Colonic mucosa (tissue), 4 donors: ENCODE measurements at regions of chr2 and their contacts with region 1.

Region 1: GRCh38 chr2:201071479-201072200 is at the starts of genes HYCC2 and NDUFB3:
- DNase-seq: peak; percentile 94
- H3K4me3 ChIP-seq: peak within 1 kb of the TSS; percentile 89
- H3K27ac ChIP-seq: peak within 1 kb of the TSS; percentile 82
- H3K4me1 ChIP-seq: peaks cover 6% of the 10 kb centered on the region
- H3K27me3 ChIP-seq: no peaks in the 10 kb centered on the region
- CTCF ChIP-seq: no peak
- total RNA-seq, gene HYCC2: 23.9 to 52.6 TPM
- total RNA-seq, gene NDUFB3: 159 to 199 TPM

Region 2: GRCh38 chr2:201118121-201118960 is 46.7 kb after region 1 on chr2:
- intact Hi-C with region 1: loop called (anchors 5 kb)
- DNase-seq: peak; percentile 93
- H3K4me3 ChIP-seq: peak overlapping the region; percentile 93
- H3K27ac ChIP-seq: peak overlapping the region; percentile 100
- H3K4me1 ChIP-seq: no peaks in the 10 kb centered on the region
- H3K27me3 ChIP-seq: no peaks in the 10 kb centered on the region
- CTCF ChIP-seq: peak; percentile 44

Region 3: DNA sequence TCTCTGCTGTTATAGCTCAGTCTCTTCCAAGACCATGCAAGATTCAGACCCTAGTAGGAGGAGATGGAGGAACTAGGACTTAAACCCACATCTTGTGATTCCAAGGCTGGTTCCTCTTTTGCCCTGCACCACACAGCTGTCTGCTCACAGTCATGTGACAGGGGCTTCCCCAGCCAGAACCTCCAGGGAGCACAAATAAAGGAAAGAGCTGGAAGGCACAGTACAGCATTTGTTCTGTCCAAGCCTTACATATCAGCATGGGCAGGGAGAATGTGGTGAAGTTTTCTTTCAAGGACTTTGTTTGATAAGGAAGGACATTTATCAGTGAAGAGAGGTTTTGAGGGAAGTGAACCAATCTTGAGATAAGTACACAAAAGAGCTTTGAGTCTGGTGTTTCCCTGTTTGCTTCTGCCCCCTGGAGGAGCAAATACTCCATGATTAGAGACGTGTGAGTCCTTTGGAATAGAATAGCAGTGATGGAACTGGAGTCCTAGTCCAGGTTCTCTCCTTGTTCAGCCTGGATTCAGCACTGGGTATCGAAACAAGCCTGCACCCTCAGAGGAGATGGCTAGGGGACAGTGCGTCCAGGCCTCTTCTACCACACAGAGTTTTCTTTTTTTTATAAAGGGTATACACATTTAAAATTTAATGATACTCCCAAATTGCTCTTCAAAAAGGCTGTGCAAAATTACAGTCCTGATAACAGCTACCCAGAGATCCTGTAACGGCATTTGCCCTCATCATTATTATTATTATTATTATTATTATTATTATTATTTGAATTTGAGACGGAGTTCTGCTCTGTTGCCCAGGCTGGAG is 86.7 kb after region 1 on chr2:
- intact Hi-C with region 1: loop called (anchors 5 kb)
- DNase-seq: peak; percentile 89
- H3K4me3 ChIP-seq: no peak overlapping the region
- H3K27ac ChIP-seq: peak overlapping the region; percentile 84
- H3K4me1 ChIP-seq: peaks cover 11% of the 10 kb centered on the region
- H3K27me3 ChIP-seq: no peaks in the 10 kb centered on the region
- CTCF ChIP-seq: peak; percentile 48

Region 4: GRCh38 chr2:201176081-201176481 is 104.4 kb after region 1 on chr2:
- intact Hi-C with region 1: loop called (anchors 5 kb)
- DNase-seq: peak; percentile 68
- H3K4me3 ChIP-seq: no peak overlapping the region
- H3K27ac ChIP-seq: peak overlapping the region; percentile 66
- H3K4me1 ChIP-seq: no peaks in the 10 kb centered on the region
- H3K27me3 ChIP-seq: no peaks in the 10 kb centered on the region
- CTCF ChIP-seq: no peak

Region 5: DNA sequence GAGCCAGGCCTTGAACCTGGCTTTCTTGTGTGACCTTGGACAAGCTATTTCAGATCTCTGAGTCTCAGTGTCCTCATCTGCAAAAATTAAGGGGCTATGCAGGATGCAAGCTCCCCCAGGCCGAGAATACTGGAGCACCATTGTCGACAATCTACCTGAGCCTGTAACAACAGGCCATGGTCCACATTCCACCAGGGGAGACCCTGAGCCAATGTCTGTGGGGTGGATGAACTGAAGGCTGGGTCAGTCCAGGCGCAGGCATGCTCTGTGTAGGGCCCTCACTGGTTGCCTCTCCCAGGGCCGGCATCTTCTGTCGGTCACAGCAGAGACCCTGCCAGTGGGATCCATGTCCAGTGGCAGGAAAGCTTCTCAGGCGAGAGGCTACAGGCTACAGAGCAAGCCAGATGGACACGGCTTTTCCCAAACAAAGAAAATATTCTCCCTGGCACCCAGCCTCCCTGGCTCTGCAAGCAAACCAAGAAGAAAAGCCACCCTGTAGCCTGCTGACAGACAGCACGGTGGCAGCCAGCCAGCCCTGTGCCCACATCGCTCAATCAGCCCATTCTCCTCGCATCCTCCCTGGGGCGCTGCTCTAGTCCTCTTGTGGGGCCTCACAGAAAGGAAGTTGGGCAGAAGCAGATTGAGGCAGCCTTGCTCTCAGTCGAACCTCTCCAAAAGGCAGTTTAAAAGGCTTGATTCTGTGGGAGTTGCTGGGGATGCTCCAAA is 913.3 kb after region 1 on chr2:
- intact Hi-C with region 1: no loop called
- DNase-seq: peak; percentile 24
- H3K4me3 ChIP-seq: no peak overlapping the region
- H3K27ac ChIP-seq: no peak overlapping the region
- H3K4me1 ChIP-seq: no peaks in the 10 kb centered on the region
- H3K27me3 ChIP-seq: no peaks in the 10 kb centered on the region
- CTCF ChIP-seq: no peak